Heart left ventricle (tissue), 16 donors: ENCODE measurements at regions of chr1 and their contacts with region 1.

Region 1: DNA sequence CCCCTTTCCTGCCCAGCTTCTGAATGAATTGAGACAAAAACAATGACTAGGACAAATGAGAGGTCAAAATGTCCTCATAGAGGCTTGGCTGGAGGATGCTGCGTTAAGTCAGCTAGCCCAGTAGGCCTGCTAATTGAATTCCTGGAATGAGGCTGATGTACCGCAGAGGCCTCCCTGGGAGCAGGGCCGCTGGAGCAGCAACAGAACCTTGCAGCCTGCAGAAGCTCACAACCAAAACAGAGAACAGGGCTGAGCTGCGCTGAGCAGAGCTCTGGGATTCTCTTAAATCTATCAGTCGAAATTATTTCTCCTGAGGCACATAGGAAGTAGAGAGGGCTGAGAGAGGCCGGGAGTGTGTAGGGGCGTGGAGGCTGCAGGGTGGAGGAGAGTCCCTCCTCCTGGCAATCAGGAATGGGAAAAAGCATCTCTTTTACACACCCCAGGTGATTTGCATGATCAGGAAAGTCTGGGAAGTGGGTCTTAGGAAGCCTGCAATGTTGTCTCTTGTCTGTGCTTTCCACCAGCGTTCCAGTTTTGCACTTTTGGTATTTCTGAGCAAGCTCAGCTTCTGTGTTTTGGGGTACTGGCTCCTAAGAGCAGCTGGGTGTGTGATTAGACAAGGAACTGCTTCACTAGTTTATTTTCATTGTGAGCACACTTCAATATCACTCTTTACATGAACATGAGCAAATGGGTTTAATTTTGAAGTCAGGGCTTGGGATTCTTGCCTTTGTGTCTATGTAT is 66.5 kb downstream of the RYR2 start:
- DNase-seq: no peak
- ATAC-seq: peak in 3 of 4 donors; percentile 1 to 11 (median 9)
- H3K4me3 ChIP-seq: no peak overlapping the region
- H3K27ac ChIP-seq: peak overlapping the region in 7 of 12 donors; percentile 23 to 52 (median 47)
- H3K4me1 ChIP-seq: peaks cover 0 to 72% (median 24%) of the 10 kb centered on the region in 12 donors
- H3K27me3 ChIP-seq: no peaks in the 10 kb centered on the region
- CTCF ChIP-seq: no peak
- POLR2A ChIP-seq: no peak

Region 2: GRCh38 chr1:237050185-237050584 is 58.3 kb before region 1 on chr1:
- intact Hi-C with region 1: loop called in 1 of 10 experiments (anchors 5 kb)
- DNase-seq: no peak
- ATAC-seq: peak; percentile 49 to 57 (median 53)
- H3K4me3 ChIP-seq: peak overlapping the region in 6 of 12 donors; percentile 0 to 85 (median 76)
- H3K27ac ChIP-seq: peak overlapping the region in 10 of 12 donors; percentile 4 to 99 (median 95)
- H3K4me1 ChIP-seq: peaks cover 0 to 52% (median 13%) of the 10 kb centered on the region in 12 donors
- H3K27me3 ChIP-seq: peaks cover 0 to 10% (median 0%) of the 10 kb centered on the region in 9 donors
- CTCF ChIP-seq: no peak
- POLR2A ChIP-seq: no peak

Region 3: GRCh38 chr1:237154157-237154556 is 45.7 kb after region 1 on chr1:
- intact Hi-C with region 1: no loop called
- DNase-seq: no peak
- ATAC-seq: peak in 3 of 4 donors; percentile 27 to 77 (median 36)
- H3K4me3 ChIP-seq: no peak overlapping the region
- H3K27ac ChIP-seq: peak overlapping the region in 2 of 12 donors; percentile 10 to 36
- H3K4me1 ChIP-seq: peaks cover 0 to 79% (median 27%) of the 10 kb centered on the region in 12 donors
- H3K27me3 ChIP-seq: no peaks in the 10 kb centered on the region
- CTCF ChIP-seq: no peak
- POLR2A ChIP-seq: no peak